ENCODE measurements at regions of chr10 and their contacts with region 1.

Region 1: GRCh38 chr10:48639632-48640031 is 34.8 kb upstream of the ARHGAP22 start:
- DNase-seq: no peak
- H3K4me3 ChIP-seq: no peak overlapping the region
- H3K27ac ChIP-seq: peak overlapping the region; percentile 10
- H3K4me1 ChIP-seq: peaks cover 13% of the 10 kb centered on the region
- H3K27me3 ChIP-seq: no peaks in the 10 kb centered on the region
- CTCF ChIP-seq: no peak
- POLR2A ChIP-seq: no peak

Region 2: DNA sequence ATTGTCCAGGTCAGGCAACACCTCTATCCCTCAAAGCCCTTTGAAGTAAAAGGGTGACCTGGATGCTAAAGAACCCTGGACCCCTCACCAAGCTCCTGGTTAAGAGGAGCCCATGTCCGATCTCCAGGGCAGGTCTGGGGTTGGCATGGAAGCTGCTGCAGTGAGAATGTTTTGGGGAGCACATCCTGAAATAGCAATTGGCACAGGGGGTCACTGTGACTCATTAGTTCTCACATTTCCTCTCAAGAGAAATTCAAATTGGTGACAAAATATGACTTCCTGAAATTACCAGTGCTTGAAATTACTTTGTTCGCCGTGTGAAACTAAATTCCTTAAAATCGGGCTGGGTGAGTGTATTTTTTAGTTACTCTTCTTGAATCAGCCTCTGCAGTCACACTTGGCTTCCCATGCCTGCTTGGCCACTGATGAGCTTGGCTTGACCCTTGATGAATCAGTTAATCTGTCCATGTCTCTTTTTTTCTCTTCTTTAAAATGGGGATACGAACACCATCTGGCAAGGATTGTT is 16.0 kb before region 1 on chr10:
- CTCF ChIA-PET with region 1: interaction called, 12 read pairs
- POLR2A ChIA-PET with region 1: no interaction called
- dilution Hi-C with region 1: no loop called
- intact Hi-C with region 1: no loop called
- DNase-seq: peak; percentile 10
- H3K4me3 ChIP-seq: no peak overlapping the region
- H3K27ac ChIP-seq: no peak overlapping the region
- H3K4me1 ChIP-seq: peaks cover 28% of the 10 kb centered on the region
- H3K27me3 ChIP-seq: no peaks in the 10 kb centered on the region
- CTCF ChIP-seq: no peak
- POLR2A ChIP-seq: no peak

Region 3: GRCh38 chr10:48838834-48839233 is 199.2 kb after region 1 on chr10:
- CTCF ChIA-PET with region 1: no interaction called
- POLR2A ChIA-PET with region 1: no interaction called
- dilution Hi-C with region 1: no loop called
- intact Hi-C with region 1: no loop called
- DNase-seq: no peak
- H3K4me3 ChIP-seq: no peak overlapping the region
- H3K27ac ChIP-seq: no peak overlapping the region
- H3K4me1 ChIP-seq: no peaks in the 10 kb centered on the region
- H3K27me3 ChIP-seq: peaks cover 0 to 5% of the 10 kb centered on the region in 2 experiments
- CTCF ChIP-seq: no peak
- POLR2A ChIP-seq: no peak

Measured in endothelial cell of umbilical vein (primary cell).